Ovary (tissue), 10 donors: ENCODE measurements at regions of chr5 and their contacts with region 1.

Region 1: GRCh38 chr5:36739751-36740221 is 133.4 kb downstream of the SLC1A3 start:
- DNase-seq: peak; percentile 15 to 65 (median 39)
- H3K4me3 ChIP-seq: no peak overlapping the region
- H3K27ac ChIP-seq: no peak overlapping the region
- H3K4me1 ChIP-seq: no peaks in the 10 kb centered on the region
- H3K27me3 ChIP-seq: no peaks in the 10 kb centered on the region
- CTCF ChIP-seq: peak in 1 of 3 donors; percentile 24
- EP300 ChIP-seq: no peak
- POLR2A ChIP-seq: no peak

Region 2: DNA sequence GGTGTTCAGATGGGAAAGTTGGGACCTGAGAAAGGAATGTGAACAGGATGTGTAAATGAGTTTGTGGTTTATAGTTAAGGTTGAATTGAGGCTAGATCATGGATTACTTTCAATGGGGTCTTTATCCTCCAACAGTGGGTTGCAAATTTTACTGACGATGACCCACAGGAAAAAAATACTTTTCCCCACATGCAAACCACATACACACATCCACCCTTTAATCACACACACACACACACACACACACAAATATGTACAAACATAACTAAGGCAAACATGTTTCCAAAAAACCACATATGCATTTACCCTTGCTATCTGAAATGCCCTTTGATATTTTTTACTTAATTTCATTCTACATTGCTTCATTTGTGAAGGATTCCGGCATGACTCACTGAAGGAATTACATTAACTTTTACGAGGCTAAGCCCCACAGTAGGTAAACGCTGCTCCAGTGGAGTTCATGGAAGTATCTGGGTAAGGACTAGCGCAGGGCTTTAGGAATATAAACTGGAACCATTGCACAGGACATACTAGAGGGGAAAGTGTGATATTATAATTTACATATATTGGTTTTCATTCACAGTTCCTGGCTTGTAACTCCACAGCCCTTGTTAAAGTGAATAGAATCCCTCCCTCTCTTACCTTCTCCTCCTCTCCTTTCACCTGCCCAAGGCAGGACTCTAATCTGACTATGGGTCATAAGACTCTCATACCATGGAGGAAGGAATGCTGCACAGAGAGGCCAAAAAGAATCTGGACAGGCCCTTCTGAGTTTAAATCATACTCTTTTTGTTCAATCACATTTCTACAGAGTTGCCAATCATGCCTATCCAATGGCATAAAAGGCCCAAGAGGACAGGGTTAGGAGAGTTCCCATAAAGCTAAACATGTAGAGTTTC is 1130.7 kb before region 1 on chr5:
- intact Hi-C with region 1: no loop called
- DNase-seq: no peak
- H3K4me3 ChIP-seq: no peak overlapping the region
- H3K27ac ChIP-seq: no peak overlapping the region
- H3K4me1 ChIP-seq: no peaks in the 10 kb centered on the region
- H3K27me3 ChIP-seq: no peaks in the 10 kb centered on the region
- CTCF ChIP-seq: no peak
- EP300 ChIP-seq: no peak
- POLR2A ChIP-seq: no peak

Region 3: GRCh38 chr5:36875790-36876388 is 136.1 kb after region 1 on chr5:
- intact Hi-C with region 1: loop called in 1 of 4 experiments (anchors 10 kb)
- DNase-seq: peak; percentile 76 to 86 (median 83)
- H3K4me3 ChIP-seq: peak overlapping the region; percentile 62
- H3K27ac ChIP-seq: peak overlapping the region; percentile 92 to 98
- H3K4me1 ChIP-seq: peaks cover 4% of the 10 kb centered on the region
- H3K27me3 ChIP-seq: no peaks in the 10 kb centered on the region
- CTCF ChIP-seq: peak; percentile 40 to 54 (median 40)
- EP300 ChIP-seq: no peak
- POLR2A ChIP-seq: peak; percentile 15

Region 4: GRCh38 chr5:36944607-36945225 is 204.9 kb after region 1 on chr5:
- intact Hi-C with region 1: loop called in 1 of 4 experiments (anchors 10 kb)
- DNase-seq: no peak
- H3K4me3 ChIP-seq: no peak overlapping the region
- H3K27ac ChIP-seq: no peak overlapping the region
- H3K4me1 ChIP-seq: no peaks in the 10 kb centered on the region
- H3K27me3 ChIP-seq: no peaks in the 10 kb centered on the region
- CTCF ChIP-seq: no peak
- EP300 ChIP-seq: no peak
- POLR2A ChIP-seq: no peak

Region 5: DNA sequence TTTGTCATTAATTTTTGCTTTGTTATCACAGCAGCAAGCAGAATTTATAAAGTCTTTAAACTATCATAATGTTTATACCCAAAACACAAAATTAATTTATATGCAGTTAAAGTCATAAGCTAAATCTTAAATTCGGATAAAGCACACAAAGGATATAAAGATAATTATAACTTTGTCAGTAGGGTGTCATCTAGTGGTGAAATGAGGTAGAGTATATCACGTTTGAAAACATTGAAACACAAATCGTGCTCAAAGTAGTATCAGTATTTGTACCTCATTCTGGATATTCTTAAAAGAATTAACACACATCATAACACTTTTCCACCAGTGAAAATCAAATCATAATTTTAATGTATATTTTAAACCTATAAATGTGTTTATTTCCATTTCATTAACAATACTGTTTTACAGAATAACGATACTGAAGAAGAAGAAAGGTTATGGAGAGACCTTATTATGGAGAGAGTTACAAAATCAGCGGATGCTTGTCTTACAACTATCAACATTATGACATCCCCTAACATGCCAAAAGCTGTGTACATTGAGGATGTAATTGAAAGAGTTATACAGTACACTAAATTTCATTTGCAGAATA is 266.3 kb after region 1 on chr5:
- intact Hi-C with region 1: loop called in 3 of 4 experiments (anchors 5 to 10 kb)
- DNase-seq: no peak
- H3K4me3 ChIP-seq: no peak overlapping the region
- H3K27ac ChIP-seq: no peak overlapping the region
- H3K4me1 ChIP-seq: no peaks in the 10 kb centered on the region
- H3K27me3 ChIP-seq: no peaks in the 10 kb centered on the region
- CTCF ChIP-seq: peak; percentile 28 to 58 (median 31)
- EP300 ChIP-seq: no peak
- POLR2A ChIP-seq: no peak